ENCODE measurements at regions of chr15 and their contacts with region 1.

Region 1: DNA sequence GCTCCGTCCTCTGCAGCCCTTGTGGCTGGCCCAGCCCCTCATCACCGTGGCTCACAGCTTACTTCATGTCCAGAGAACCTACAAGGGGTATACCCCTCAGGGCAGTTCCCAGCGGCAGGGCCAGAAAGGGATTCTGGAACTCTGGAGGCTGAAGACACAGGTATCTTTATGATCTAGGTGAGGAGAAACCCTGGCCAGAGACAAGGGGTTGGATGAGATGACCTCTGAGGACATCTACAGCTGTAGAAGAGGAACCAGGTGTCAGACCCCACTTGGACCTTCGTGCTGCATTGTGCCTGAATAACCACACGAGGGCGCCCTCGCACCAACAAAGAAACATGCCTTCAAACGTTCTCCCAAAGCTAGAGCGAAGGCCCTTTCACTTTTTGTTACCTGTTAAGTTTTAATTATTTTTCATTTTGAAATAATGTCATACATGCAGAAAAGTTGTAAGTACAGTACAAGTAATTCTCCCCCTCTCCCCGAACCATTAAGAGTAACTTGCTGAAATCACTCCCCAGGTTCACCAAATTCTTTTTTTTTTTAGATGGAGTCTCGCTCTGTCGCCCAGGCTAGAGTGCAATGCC is 118.7 kb upstream of the SMAD3 start:
- DNase-seq: peak; percentile 55
- H3K4me3 ChIP-seq: no peak overlapping the region
- H3K27ac ChIP-seq: no peak overlapping the region
- H3K4me1 ChIP-seq: no peaks in the 10 kb centered on the region
- H3K27me3 ChIP-seq: no peaks in the 10 kb centered on the region
- CTCF ChIP-seq: peak; percentile 85 to 94

Region 2: DNA sequence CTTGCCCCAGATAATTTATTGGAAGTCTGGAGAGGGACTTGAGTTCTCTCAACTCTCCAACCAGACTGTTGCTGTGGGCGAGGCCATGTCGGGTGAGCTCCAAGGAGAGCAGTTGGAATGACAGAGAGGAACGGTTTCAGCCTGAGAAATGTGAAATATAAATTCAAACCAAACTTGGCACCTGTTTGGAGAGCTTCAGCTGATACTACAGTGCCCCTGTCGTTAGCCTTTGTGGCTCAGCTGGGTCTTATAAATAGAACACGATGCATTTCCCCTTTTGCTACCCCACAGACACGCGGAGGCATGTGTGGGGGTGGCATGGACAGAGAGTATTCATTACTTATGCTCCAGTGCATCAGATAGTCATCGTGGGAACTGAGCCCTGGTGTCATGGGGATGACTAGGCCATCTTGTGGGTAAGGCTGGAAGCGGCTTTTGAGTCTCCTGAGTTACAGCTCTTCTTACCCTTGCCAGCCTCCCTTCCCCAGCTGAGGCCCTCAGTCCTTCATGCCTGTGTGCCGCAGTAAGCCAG is 134.3 kb after region 1 on chr15:
- CTCF ChIA-PET with region 1: no interaction called
- dilution Hi-C with region 1: no loop called
- in situ Hi-C with region 1: no loop called
- intact Hi-C with region 1: loop called (anchors 1 kb)
- DNase-seq: peak; percentile 80
- H3K4me3 ChIP-seq: no peak overlapping the region
- H3K27ac ChIP-seq: peak overlapping the region; percentile 84
- H3K4me1 ChIP-seq: peaks cover 45% of the 10 kb centered on the region
- H3K27me3 ChIP-seq: no peaks in the 10 kb centered on the region
- CTCF ChIP-seq: peak in 1 of 2 donors; percentile 41

Region 3: GRCh38 chr15:67240235-67241131 is 293.8 kb after region 1 on chr15:
- CTCF ChIA-PET with region 1: interaction called, 9 read pairs
- dilution Hi-C with region 1: no loop called
- in situ Hi-C with region 1: no loop called
- intact Hi-C with region 1: loop called (anchors 5 kb)
- DNase-seq: peak; percentile 30
- H3K4me3 ChIP-seq: no peak overlapping the region
- H3K27ac ChIP-seq: peak overlapping the region; percentile 46
- H3K4me1 ChIP-seq: peaks cover 16% of the 10 kb centered on the region
- H3K27me3 ChIP-seq: no peaks in the 10 kb centered on the region
- CTCF ChIP-seq: peak; percentile 26 to 62

Region 4: GRCh38 chr15:67433495-67434099 is 486.9 kb after region 1 on chr15:
- CTCF ChIA-PET with region 1: interaction called, 5 read pairs
- dilution Hi-C with region 1: no loop called
- in situ Hi-C with region 1: no loop called
- intact Hi-C with region 1: loop called (anchors 1 kb)
- DNase-seq: peak; percentile 39
- H3K4me3 ChIP-seq: no peak overlapping the region
- H3K27ac ChIP-seq: no peak overlapping the region
- H3K4me1 ChIP-seq: no peaks in the 10 kb centered on the region
- H3K27me3 ChIP-seq: no peaks in the 10 kb centered on the region
- CTCF ChIP-seq: peak; percentile 79 to 83